ENCODE measurements at regions of chr15 and their contacts with region 1.

Region 1: DNA sequence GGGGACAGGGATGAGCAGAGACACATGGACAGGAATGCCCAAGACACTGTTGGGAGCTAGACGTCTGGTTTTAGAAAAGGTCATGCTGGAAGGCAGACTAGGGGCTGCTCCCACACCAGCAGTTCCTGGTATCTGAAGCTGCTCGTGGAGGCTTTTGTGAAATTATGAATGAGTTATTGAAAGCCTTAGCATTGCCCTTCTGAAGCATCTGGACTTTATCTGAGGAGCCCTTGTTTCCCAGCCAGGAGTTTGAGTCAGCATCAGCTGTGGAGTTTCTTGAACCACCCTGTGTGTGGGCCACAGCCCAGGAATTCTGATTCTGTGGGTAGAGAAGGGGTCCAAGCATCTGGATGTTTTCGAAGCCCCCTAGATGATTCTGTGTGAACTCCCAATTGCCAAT is 258.7 kb downstream of the SLCO3A1 start:
- DNase-seq: peak in 2 of 5 donors; percentile 42 to 57
- ATAC-seq: peak in 3 of 4 donors; percentile 33 to 66 (median 61)
- H3K4me3 ChIP-seq: no peak overlapping the region
- H3K27ac ChIP-seq: peak overlapping the region in 1 of 12 donors; percentile 37
- H3K4me1 ChIP-seq: peaks cover 0 to 66% (median 16%) of the 10 kb centered on the region in 12 donors
- H3K27me3 ChIP-seq: no peaks in the 10 kb centered on the region
- CTCF ChIP-seq: no peak
- POLR2A ChIP-seq: no peak

Region 2: DNA sequence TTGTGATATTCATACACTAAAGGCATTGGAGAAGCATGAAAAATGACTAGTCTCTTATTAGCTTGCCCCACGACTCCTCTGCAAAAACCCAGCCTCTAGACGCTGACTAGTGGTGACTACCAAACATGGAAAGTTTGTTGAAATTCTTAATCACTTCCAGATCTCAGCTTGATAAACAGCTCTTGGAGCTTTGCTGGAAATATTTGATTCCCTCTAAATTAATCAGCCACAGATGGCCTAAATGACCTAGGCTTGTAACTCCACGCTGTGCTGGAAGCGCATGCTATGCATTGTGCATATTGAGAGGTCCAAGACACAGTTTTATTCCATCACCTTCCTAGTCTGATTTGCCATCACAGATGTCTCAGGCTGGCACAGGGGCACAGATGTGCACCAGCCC is 36.8 kb after region 1 on chr15:
- intact Hi-C with region 1: no loop called
- DNase-seq: no peak
- ATAC-seq: no peak
- H3K4me3 ChIP-seq: no peak overlapping the region
- H3K27ac ChIP-seq: no peak overlapping the region
- H3K4me1 ChIP-seq: peaks cover 0 to 4% (median 0%) of the 10 kb centered on the region in 12 donors
- H3K27me3 ChIP-seq: no peaks in the 10 kb centered on the region
- CTCF ChIP-seq: no peak
- POLR2A ChIP-seq: no peak

Region 3: GRCh38 chr15:92197746-92198145 is 85.6 kb after region 1 on chr15:
- intact Hi-C with region 1: loop called in 2 of 10 experiments (anchors 5 to 10 kb)
- DNase-seq: no peak
- ATAC-seq: no peak
- H3K4me3 ChIP-seq: no peak overlapping the region
- H3K27ac ChIP-seq: no peak overlapping the region
- H3K4me1 ChIP-seq: peaks cover 0 to 6% (median 0%) of the 10 kb centered on the region in 12 donors
- H3K27me3 ChIP-seq: no peaks in the 10 kb centered on the region
- CTCF ChIP-seq: no peak
- POLR2A ChIP-seq: no peak

Region 4: GRCh38 chr15:92277776-92278175 is 165.6 kb after region 1 on chr15:
- intact Hi-C with region 1: no loop called
- DNase-seq: peak in 1 of 5 donors; percentile 19
- ATAC-seq: peak in 3 of 4 donors; percentile 57 to 77 (median 58)
- H3K4me3 ChIP-seq: no peak overlapping the region
- H3K27ac ChIP-seq: no peak overlapping the region
- H3K4me1 ChIP-seq: no peaks in the 10 kb centered on the region
- H3K27me3 ChIP-seq: no peaks in the 10 kb centered on the region
- CTCF ChIP-seq: peak; percentile 13 to 51 (median 36)
- POLR2A ChIP-seq: no peak